GM12878 (cell line): ENCODE measurements at regions of chr2 and their contacts with region 1.

Region 1: GRCh38 chr2:8303322-8303832 is 378.5 kb upstream of the ID2 start:
- DNase-seq: peak; percentile 95
- ATAC-seq: peak; percentile 77
- H3K4me3 ChIP-seq: no peak overlapping the region
- H3K27ac ChIP-seq: peak overlapping the region; percentile 81
- H3K4me1 ChIP-seq: peaks cover 74% of the 10 kb centered on the region
- H3K27me3 ChIP-seq: no peaks in the 10 kb centered on the region
- CTCF ChIP-seq: peak in 1 of 3 experiments; percentile 4; a peak in 1 of 6 replicates
- EP300 ChIP-seq: peak; percentile 92 to 94
- POLR2A ChIP-seq: peak; percentile 27; the same call in 1 of the 2 replicates
- RAD21 ChIP-seq: peak; percentile 35; the same call in 1 of the 2 replicates

Region 2: GRCh38 chr2:7825591-7826312 is 477.6 kb before region 1 on chr2:
- CTCF ChIA-PET with region 1: no interaction called
- POLR2A ChIA-PET with region 1: no interaction called
- RAD21 ChIA-PET with region 1: no interaction called
- SMC1A ChIA-PET with region 1: no interaction called
- in situ Hi-C with region 1: no loop called
- intact Hi-C with region 1: loop called (anchors 10 kb)
- DNase-seq: peak; percentile 78
- ATAC-seq: peak; percentile 97
- H3K4me3 ChIP-seq: no peak overlapping the region
- H3K27ac ChIP-seq: peak overlapping the region; percentile 75
- H3K4me1 ChIP-seq: peaks cover 10% of the 10 kb centered on the region
- H3K27me3 ChIP-seq: no peaks in the 10 kb centered on the region
- CTCF ChIP-seq: no peak
- EP300 ChIP-seq: peak; percentile 94 to 98
- POLR2A ChIP-seq: no peak
- RAD21 ChIP-seq: peak; percentile 19; the same call in 1 of the 2 replicates

Region 3: GRCh38 chr2:8234757-8235374 is 68.5 kb before region 1 on chr2:
- CTCF ChIA-PET with region 1: interaction called, 4 read pairs
- POLR2A ChIA-PET with region 1: interaction called, 3 read pairs
- RAD21 ChIA-PET with region 1: interaction called, 21 read pairs
- SMC1A ChIA-PET with region 1: interaction called, 27 read pairs
- in situ Hi-C with region 1: no loop called
- intact Hi-C with region 1: loop called (anchors 1 kb)
- DNase-seq: peak; percentile 90
- ATAC-seq: peak; percentile 88
- H3K4me3 ChIP-seq: peak overlapping the region; percentile 26; the same call in 1 of the 2 replicates
- H3K27ac ChIP-seq: peak overlapping the region; percentile 41
- H3K4me1 ChIP-seq: peaks cover 39% of the 10 kb centered on the region
- H3K27me3 ChIP-seq: no peaks in the 10 kb centered on the region
- CTCF ChIP-seq: no peak
- EP300 ChIP-seq: peak; percentile 78 to 84
- POLR2A ChIP-seq: no peak
- RAD21 ChIP-seq: no peak

Region 4: DNA sequence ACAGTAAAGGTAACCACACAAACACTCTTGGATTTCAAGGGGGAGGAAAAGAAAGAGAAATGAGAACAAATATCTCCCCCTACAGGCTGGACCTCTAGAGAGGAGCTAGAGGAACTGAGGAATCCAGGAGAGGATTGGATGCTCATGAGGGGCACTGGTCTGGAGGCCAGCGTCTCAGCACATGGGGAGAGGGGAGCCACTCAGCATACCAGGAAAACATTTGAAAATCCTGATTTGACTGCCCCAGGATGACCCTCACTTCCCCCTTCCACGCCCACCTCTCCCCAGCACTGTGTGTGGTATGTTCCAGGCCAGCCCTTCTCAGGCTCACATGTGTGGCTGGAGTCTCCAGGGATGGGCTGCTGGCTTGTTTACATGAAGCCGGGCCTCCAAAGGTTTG is 18.3 kb before region 1 on chr2:
- CTCF ChIA-PET with region 1: interaction called, 20 read pairs
- POLR2A ChIA-PET with region 1: no interaction called
- RAD21 ChIA-PET with region 1: no interaction called
- SMC1A ChIA-PET with region 1: interaction called, 7 read pairs
- in situ Hi-C with region 1: no loop called
- intact Hi-C with region 1: no loop called
- DNase-seq: no peak
- ATAC-seq: no peak; the same call in 2 of the 3 replicates
- H3K4me3 ChIP-seq: no peak overlapping the region
- H3K27ac ChIP-seq: no peak overlapping the region
- H3K4me1 ChIP-seq: no peaks in the 10 kb centered on the region
- H3K27me3 ChIP-seq: no peaks in the 10 kb centered on the region
- CTCF ChIP-seq: 0 out of 6 replicates have a peak, but pooled peaks of 1 of the 3 experiments have one; percentile 12
- EP300 ChIP-seq: no peak
- POLR2A ChIP-seq: no peak
- RAD21 ChIP-seq: no peak

Region 5: DNA sequence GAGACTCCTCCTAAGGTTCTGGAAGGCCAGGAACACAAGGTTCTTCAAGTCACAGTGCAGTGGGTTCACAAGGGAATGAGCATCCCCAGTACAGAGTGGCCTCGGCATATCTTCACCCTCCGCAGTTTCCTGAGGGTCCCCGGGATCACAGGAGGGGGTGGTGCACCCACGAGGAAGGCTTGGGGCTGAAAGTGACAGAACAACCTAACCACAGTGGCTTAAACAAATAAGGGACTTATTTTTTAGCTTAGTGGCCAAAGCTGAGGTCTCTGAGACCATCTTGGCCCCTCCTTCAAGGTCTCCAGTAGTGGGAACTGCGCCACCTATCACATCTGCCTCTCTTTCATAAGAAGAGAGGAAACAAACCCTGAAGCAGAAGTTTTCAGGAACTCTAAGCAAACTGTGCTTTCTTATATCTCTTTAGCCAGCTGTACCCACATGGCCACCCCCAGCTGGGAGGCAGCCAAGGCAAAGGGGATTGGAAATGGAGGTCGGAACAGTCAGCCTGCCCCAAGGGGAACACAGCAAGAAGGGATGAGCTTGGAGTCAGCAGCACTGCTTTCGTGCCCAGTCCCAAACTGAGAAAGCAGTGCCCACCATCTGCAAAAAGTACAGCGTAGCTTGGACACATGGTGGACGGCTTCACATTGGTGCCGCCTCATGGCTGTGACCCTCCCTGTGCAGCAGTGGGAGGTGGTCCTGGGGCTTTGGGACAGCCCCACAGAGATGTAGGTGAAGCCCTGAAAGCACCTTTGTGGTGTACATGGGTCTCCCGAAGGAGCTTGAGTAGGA is 118.5 kb after region 1 on chr2:
- CTCF ChIA-PET with region 1: interaction called, 4 read pairs
- POLR2A ChIA-PET with region 1: no interaction called
- RAD21 ChIA-PET with region 1: interaction called, 22 read pairs
- SMC1A ChIA-PET with region 1: interaction called, 352 read pairs
- in situ Hi-C with region 1: no loop called
- intact Hi-C with region 1: no loop called
- DNase-seq: peak; percentile 71
- ATAC-seq: peak; percentile 85
- H3K4me3 ChIP-seq: no peak overlapping the region
- H3K27ac ChIP-seq: peak overlapping the region; percentile 46
- H3K4me1 ChIP-seq: peaks cover 16% of the 10 kb centered on the region
- H3K27me3 ChIP-seq: no peaks in the 10 kb centered on the region
- CTCF ChIP-seq: peak; percentile 26 to 44 (median 29); a peak in 5 of 6 replicates
- EP300 ChIP-seq: peak; percentile 56 to 80; a peak in 3 of 4 replicates
- POLR2A ChIP-seq: no peak
- RAD21 ChIP-seq: peak; percentile 49

Region 6: DNA sequence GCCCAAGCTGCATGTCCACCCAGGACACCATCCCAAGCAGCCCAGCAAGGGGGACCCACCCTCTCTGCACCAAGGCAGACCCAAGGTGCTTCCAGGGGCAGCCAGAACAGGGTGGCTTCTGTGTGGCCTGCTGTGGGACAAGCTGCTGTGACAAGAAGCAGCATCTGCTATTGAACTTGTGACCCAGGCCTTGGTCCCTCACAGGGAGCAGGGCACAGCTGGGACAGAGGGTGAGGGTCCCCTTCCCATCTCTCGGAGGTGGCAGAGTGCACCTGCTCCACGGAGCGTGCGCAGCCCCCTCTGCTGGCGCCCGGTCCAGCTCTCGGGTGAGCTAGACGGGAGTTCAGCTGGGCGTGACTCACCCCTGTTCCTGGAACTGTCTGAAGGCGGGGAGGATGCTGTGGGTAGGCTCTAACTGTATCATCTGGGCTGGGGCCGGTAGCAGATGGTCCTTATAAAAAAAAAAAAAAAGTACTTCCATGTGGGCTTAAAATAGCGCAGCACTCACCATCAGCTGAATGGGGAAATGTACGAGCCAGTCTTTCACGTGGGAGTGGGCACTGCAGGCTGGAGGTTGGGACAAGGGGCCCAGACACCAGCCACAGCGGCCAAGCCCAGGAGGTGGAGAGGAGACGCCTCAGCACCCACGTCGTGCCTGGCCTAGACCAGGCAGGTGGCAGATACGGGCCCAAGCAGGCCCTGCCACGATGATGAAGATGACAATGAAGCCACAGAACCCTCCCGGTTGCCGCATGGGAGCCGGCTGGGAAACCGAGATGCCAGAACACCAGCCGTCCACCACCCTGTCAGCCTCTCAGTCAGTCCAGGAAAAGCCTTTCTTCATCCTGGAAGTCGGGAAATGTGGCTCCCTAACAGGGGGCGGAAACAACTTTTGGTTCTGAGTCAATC is 241.7 kb after region 1 on chr2:
- CTCF ChIA-PET with region 1: no interaction called
- POLR2A ChIA-PET with region 1: no interaction called
- RAD21 ChIA-PET with region 1: no interaction called
- SMC1A ChIA-PET with region 1: no interaction called
- in situ Hi-C with region 1: loop called (anchors 5 kb)
- intact Hi-C with region 1: loop called (anchors 2 kb)
- DNase-seq: peak; percentile 62
- ATAC-seq: peak; percentile 71
- H3K4me3 ChIP-seq: no peak overlapping the region
- H3K27ac ChIP-seq: peak overlapping the region; percentile 95
- H3K4me1 ChIP-seq: peaks cover 56% of the 10 kb centered on the region
- H3K27me3 ChIP-seq: no peaks in the 10 kb centered on the region
- CTCF ChIP-seq: peak; percentile 44 to 66 (median 54); a peak in 5 of 6 replicates
- EP300 ChIP-seq: peak; percentile 8 to 64; a peak in 2 of 4 replicates
- POLR2A ChIP-seq: peak; percentile 29
- RAD21 ChIP-seq: peak; percentile 60